ENCODE measurements at regions of chr19 and their contacts with region 1.

Region 1: GRCh38 chr19:21020298-21021227 is at the start of gene ZNF430:
- DNase-seq: peak; percentile 96
- H3K4me3 Mint-ChIP-seq: peak within 1 kb of the TSS; percentile 99
- H3K27ac Mint-ChIP-seq: peak within 1 kb of the TSS; percentile 99
- H3K4me1 Mint-ChIP-seq: peaks cover 39% of the 10 kb centered on the region
- H3K27me3 Mint-ChIP-seq: no peaks in the 10 kb centered on the region
- total RNA-seq, gene ZNF430: 24.0 to 27.0 TPM

Region 2: DNA sequence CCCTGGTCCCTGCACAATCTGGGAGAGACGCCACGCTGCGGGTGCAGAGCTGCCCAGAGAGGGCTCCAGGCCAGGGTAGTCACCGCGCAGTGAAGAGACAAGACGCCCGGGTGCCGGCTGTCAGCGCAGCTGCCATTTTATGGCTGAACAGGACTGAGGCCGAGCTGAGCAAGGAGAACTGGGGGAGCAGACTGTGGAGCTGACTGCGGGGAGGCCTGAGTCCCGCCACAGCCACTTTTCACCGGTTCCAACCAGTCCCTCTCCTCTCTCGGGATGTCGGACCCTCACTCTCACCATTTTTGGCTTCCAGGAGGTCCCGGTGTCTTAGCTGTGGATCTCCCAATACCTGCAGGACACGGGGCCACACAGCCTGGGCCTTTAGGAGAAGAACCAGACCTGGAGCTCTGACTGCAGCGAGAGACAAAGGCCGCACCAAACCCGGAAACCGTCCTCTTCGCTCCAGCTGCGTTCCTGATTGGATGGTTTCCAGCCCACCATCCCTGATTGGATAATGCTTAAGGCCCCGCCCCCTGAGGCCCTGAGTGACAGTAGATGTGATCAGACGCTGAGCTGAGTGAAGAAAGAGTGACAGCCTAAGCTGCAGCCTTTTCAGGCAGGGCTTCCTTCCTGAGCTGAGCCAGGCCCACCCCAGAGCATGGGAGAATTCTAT is 359.3 kb before region 1 on chr19 and contains the start of gene ZNF626:
- CTCF ChIA-PET with region 1: no interaction called
- POLR2A ChIA-PET with region 1: interaction called, 10 read pairs
- DNase-seq: peak; percentile 92
- H3K4me3 Mint-ChIP-seq: peak within 1 kb of the TSS; percentile 88
- H3K27ac Mint-ChIP-seq: peak within 1 kb of the TSS; percentile 84
- H3K4me1 Mint-ChIP-seq: peaks cover 23% of the 10 kb centered on the region
- H3K27me3 Mint-ChIP-seq: no peaks in the 10 kb centered on the region
- total RNA-seq, gene ZNF626: 7.6 to 8.5 TPM

Region 3: GRCh38 chr19:20923077-20923871 is 97.3 kb before region 1 on chr19 and contains the start of gene ZNF85:
- CTCF ChIA-PET with region 1: interaction called, 3 read pairs
- POLR2A ChIA-PET with region 1: interaction called, 31 read pairs
- DNase-seq: peak; percentile 94
- H3K4me3 Mint-ChIP-seq: peak within 1 kb of the TSS; percentile 94
- H3K27ac Mint-ChIP-seq: peak within 1 kb of the TSS; percentile 94
- H3K4me1 Mint-ChIP-seq: peaks cover 19% of the 10 kb centered on the region
- H3K27me3 Mint-ChIP-seq: no peaks in the 10 kb centered on the region
- total RNA-seq, gene ZNF85: 16.4 to 17.2 TPM

Region 4: GRCh38 chr19:20999731-21000352 is 20.7 kb before region 1 on chr19:
- CTCF ChIA-PET with region 1: interaction called, 3 read pairs
- POLR2A ChIA-PET with region 1: interaction called, 45 read pairs
- DNase-seq: peak; percentile 88
- H3K4me3 Mint-ChIP-seq: peak overlapping the region; percentile 85
- H3K27ac Mint-ChIP-seq: peak overlapping the region; percentile 79
- H3K4me1 Mint-ChIP-seq: peaks cover 20% of the 10 kb centered on the region
- H3K27me3 Mint-ChIP-seq: no peaks in the 10 kb centered on the region

Region 5: GRCh38 chr19:21082011-21082975 is 61.7 kb after region 1 on chr19 and contains the start of gene ZNF714:
- CTCF ChIA-PET with region 1: interaction called, 3 read pairs
- POLR2A ChIA-PET with region 1: interaction called, 30 read pairs
- DNase-seq: peak; percentile 91
- H3K4me3 Mint-ChIP-seq: peak within 1 kb of the TSS; percentile 99
- H3K27ac Mint-ChIP-seq: peak within 1 kb of the TSS; percentile 98
- H3K4me1 Mint-ChIP-seq: peaks cover 34% of the 10 kb centered on the region
- H3K27me3 Mint-ChIP-seq: no peaks in the 10 kb centered on the region
- total RNA-seq, gene ZNF714: 20.4 to 23.7 TPM

Region 6: DNA sequence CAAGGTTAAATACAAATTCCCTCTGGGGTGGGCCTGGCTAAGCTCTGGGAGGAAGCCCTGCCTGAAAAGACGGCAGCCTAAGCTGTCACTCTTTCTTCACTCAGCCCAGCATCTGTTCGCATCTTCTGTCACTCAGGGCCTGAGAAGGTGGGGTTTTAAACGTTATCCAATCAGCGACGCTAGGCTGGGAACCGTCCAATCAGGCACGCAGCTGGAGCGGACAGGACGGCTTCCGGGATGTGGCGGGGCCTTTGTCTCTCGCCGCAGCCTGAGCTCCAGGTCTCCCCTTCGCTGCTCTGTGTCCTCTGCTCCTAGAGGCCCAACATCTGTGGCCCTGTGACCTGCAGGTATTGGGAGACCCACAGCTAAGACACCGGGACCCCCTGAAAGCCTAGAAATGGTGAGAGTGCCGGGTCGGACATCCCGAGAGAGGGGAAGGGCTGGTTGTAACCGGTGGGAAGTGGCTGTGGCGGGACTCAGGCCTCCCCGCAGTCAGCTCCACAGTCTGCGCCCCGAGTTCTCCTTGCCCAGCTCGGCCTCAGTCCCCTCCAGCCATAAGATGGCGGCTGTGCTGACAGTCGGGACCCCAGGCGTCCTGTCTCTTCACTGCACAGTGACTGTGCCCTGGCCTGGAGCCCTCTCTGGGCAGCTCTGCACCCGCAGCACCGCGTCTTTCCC is 121.4 kb after region 1 on chr19 and contains the start of gene ZNF431:
- CTCF ChIA-PET with region 1: no interaction called
- POLR2A ChIA-PET with region 1: interaction called, 29 read pairs
- DNase-seq: peak; percentile 93
- H3K4me3 Mint-ChIP-seq: peak within 1 kb of the TSS; percentile 96
- H3K27ac Mint-ChIP-seq: peak within 1 kb of the TSS; percentile 91
- H3K4me1 Mint-ChIP-seq: peaks cover 22% of the 10 kb centered on the region
- H3K27me3 Mint-ChIP-seq: no peaks in the 10 kb centered on the region
- total RNA-seq, gene ZNF431: 16.1 to 20.5 TPM

Region 7: GRCh38 chr19:21396893-21397572 is 376.5 kb after region 1 on chr19 and contains the start of gene ZNF493:
- CTCF ChIA-PET with region 1: no interaction called
- POLR2A ChIA-PET with region 1: interaction called, 11 read pairs
- DNase-seq: peak; percentile 93
- H3K4me3 Mint-ChIP-seq: peak within 1 kb of the TSS; percentile 93
- H3K27ac Mint-ChIP-seq: peak within 1 kb of the TSS; percentile 81
- H3K4me1 Mint-ChIP-seq: peaks cover 22% of the 10 kb centered on the region
- H3K27me3 Mint-ChIP-seq: no peaks in the 10 kb centered on the region
- total RNA-seq, gene ZNF493: 15.7 to 17.5 TPM